ENCODE measurements at regions of chr11 and their contacts with region 1.

Region 1: GRCh38 chr11:93543292-93543977 is at the start of gene SMCO4:
- DNase-seq: peak; percentile 83 to 94 (median 89)
- ATAC-seq: peak; percentile 86 to 94 (median 91)
- H3K4me3 ChIP-seq: peak within 1 kb of the TSS; percentile 63 to 90 (median 83)
- H3K27ac ChIP-seq: peak within 1 kb of the TSS; percentile 75 to 90 (median 85)
- H3K4me1 ChIP-seq: peaks cover 0 to 16% (median 0%) of the 10 kb centered on the region in 3 donors
- H3K27me3 ChIP-seq: no peaks in the 10 kb centered on the region
- CTCF ChIP-seq: peak; percentile 52 to 62 (median 57)
- total RNA-seq, gene SMCO4: 16.0 to 31.8 (median 19.6) TPM

Region 2: GRCh38 chr11:93234602-93235207 is 308.7 kb before region 1 on chr11:
- intact Hi-C with region 1: loop called (anchors 10 kb)
- DNase-seq: peak; percentile 70 to 87 (median 78)
- ATAC-seq: peak; percentile 94 to 99 (median 98)
- H3K4me3 ChIP-seq: no peak overlapping the region
- H3K27ac ChIP-seq: no peak overlapping the region
- H3K4me1 ChIP-seq: peaks cover 0 to 5% (median 0%) of the 10 kb centered on the region in 3 donors
- H3K27me3 ChIP-seq: no peaks in the 10 kb centered on the region
- CTCF ChIP-seq: peak; percentile 69 to 90 (median 86)

Region 3: GRCh38 chr11:93639548-93639947 is 96.1 kb after region 1 on chr11:
- intact Hi-C with region 1: loop called in 2 of 3 experiments (anchors 10 kb)
- DNase-seq: no peak
- ATAC-seq: no peak
- H3K4me3 ChIP-seq: no peak overlapping the region
- H3K27ac ChIP-seq: no peak overlapping the region
- H3K4me1 ChIP-seq: no peaks in the 10 kb centered on the region
- H3K27me3 ChIP-seq: no peaks in the 10 kb centered on the region
- CTCF ChIP-seq: no peak

Region 4: GRCh38 chr11:93652161-93652597 is 108.7 kb after region 1 on chr11:
- intact Hi-C with region 1: loop called in 1 of 3 experiments (anchors 10 kb)
- DNase-seq: peak in 2 of 6 donors; percentile 13 to 34
- ATAC-seq: peak in 3 of 4 donors; percentile 56 to 59 (median 57)
- H3K4me3 ChIP-seq: no peak overlapping the region
- H3K27ac ChIP-seq: no peak overlapping the region
- H3K4me1 ChIP-seq: no peaks in the 10 kb centered on the region
- H3K27me3 ChIP-seq: no peaks in the 10 kb centered on the region
- CTCF ChIP-seq: peak; percentile 73 to 92 (median 84)

Region 5: DNA sequence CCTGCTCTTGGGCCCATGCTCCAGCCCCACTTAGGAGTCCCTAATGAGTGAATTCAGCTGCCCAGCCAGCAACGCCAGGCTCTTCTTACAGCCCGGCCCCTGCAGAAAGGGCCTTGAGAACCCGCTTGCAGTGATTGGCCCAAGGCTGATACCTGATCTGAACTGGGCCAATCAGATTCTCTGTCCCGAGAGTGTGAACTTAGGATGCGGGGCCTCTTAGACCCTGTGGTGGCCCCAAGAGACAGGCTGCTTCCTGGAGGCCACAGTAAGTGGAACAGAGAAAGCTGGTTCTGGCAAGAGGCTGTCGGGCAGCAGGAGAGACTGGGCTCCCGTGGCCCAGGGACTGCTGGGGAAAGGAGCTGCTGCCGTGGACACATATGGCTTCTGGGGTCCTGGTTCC is 295.5 kb after region 1 on chr11:
- intact Hi-C with region 1: no loop called
- DNase-seq: no peak
- ATAC-seq: no peak
- H3K4me3 ChIP-seq: no peak overlapping the region
- H3K27ac ChIP-seq: no peak overlapping the region
- H3K4me1 ChIP-seq: no peaks in the 10 kb centered on the region
- H3K27me3 ChIP-seq: no peaks in the 10 kb centered on the region
- CTCF ChIP-seq: no peak

Measured in pancreas (tissue), 10 donors.